ENCODE measurements at regions of chr10 and their contacts with region 1.

Region 1: DNA sequence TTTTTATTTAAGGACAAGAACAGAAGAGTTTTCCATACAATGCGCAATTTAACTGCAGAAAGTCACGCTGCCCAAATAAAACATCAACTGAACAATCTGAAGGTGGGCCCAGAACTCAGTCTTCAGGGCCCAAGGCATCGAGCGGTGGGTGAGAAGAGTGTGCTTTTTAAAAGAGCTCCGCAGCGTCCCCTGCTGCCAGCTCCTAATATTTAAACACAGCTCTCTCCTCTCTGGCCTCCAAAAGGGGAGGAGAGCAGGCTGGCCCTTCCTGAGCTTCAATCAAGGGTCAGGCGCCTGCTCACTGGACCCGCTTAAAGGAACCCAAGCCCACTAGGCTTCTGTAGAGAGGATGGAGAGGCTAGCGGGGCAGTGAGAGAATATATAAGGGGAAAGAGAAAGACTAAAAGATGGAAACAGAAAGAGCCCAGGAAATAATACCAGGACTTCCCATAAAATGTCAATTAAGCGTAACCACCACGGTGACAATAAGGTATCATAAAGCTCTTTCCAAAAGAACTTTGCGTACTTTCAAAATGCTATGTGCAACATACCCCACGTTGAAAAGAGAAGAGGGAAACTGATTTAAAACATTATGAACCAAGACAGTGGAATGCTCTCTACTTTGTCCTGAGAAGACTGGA is 2.8 kb downstream of the FAM53B start:
- DNase-seq: peak; percentile 85 to 92 (median 88)
- H3K4me3 ChIP-seq: no peak overlapping the region
- H3K27ac ChIP-seq: peak overlapping the region in 1 of 2 donors; percentile 78
- H3K4me1 ChIP-seq: peaks cover 37% of the 10 kb centered on the region
- H3K27me3 ChIP-seq: no peaks in the 10 kb centered on the region
- CTCF ChIP-seq: peak; percentile 94 to 95 (median 95)
- EP300 ChIP-seq: no peak
- POLR2A ChIP-seq: no peak

Region 2: GRCh38 chr10:123913688-123914268 is 827.6 kb before region 1 on chr10:
- intact Hi-C with region 1: no loop called
- DNase-seq: peak in 1 of 5 donors; percentile 44
- H3K4me3 ChIP-seq: no peak overlapping the region
- H3K27ac ChIP-seq: no peak overlapping the region
- H3K4me1 ChIP-seq: peaks cover 5% of the 10 kb centered on the region
- H3K27me3 ChIP-seq: no peaks in the 10 kb centered on the region
- CTCF ChIP-seq: no peak
- EP300 ChIP-seq: no peak
- POLR2A ChIP-seq: no peak

Region 3: GRCh38 chr10:124063750-124064603 is 677.4 kb before region 1 on chr10:
- intact Hi-C with region 1: no loop called
- DNase-seq: peak; percentile 63 to 73 (median 66)
- H3K4me3 ChIP-seq: no peak overlapping the region
- H3K27ac ChIP-seq: peak overlapping the region; percentile 52 to 73
- H3K4me1 ChIP-seq: peaks cover 29% of the 10 kb centered on the region
- H3K27me3 ChIP-seq: no peaks in the 10 kb centered on the region
- CTCF ChIP-seq: no peak
- EP300 ChIP-seq: no peak
- POLR2A ChIP-seq: no peak

Region 4: DNA sequence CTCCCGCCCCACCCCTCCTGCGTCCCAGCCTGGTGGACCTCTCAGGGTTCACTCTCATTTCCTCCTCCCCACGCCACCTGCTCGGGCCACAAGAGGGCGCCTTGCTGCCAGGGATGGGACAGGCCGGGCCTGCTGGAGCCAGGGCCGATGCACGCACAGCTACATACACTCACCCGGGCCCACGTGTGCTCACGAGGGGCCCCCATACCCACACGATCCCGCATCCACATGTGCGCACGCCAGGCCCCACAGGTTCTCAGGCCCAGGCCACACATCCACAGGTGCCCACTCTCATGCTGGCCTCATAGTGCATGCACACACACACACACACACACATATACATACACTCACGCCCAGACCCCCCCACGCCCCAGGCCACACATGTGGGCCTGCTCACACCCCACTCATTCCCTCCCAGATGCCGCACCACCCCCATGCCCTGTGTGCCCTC is 211.2 kb before region 1 on chr10:
- intact Hi-C with region 1: loop called in 3 of 4 experiments (anchors 2 to 5 kb)
- DNase-seq: peak; percentile 84 to 92 (median 89)
- H3K4me3 ChIP-seq: no peak overlapping the region
- H3K27ac ChIP-seq: no peak overlapping the region
- H3K4me1 ChIP-seq: peaks cover 10% of the 10 kb centered on the region
- H3K27me3 ChIP-seq: no peaks in the 10 kb centered on the region
- CTCF ChIP-seq: peak; percentile 78 to 86 (median 86)
- EP300 ChIP-seq: no peak
- POLR2A ChIP-seq: no peak

Region 5: GRCh38 chr10:124539935-124540641 is 201.3 kb before region 1 on chr10:
- intact Hi-C with region 1: loop called in 3 of 4 experiments (anchors 2 to 5 kb)
- DNase-seq: peak; percentile 67 to 84 (median 81)
- H3K4me3 ChIP-seq: no peak overlapping the region
- H3K27ac ChIP-seq: no peak overlapping the region
- H3K4me1 ChIP-seq: peaks cover 17% of the 10 kb centered on the region
- H3K27me3 ChIP-seq: no peaks in the 10 kb centered on the region
- CTCF ChIP-seq: peak; percentile 70 to 89 (median 86)
- EP300 ChIP-seq: no peak
- POLR2A ChIP-seq: no peak

Region 6: DNA sequence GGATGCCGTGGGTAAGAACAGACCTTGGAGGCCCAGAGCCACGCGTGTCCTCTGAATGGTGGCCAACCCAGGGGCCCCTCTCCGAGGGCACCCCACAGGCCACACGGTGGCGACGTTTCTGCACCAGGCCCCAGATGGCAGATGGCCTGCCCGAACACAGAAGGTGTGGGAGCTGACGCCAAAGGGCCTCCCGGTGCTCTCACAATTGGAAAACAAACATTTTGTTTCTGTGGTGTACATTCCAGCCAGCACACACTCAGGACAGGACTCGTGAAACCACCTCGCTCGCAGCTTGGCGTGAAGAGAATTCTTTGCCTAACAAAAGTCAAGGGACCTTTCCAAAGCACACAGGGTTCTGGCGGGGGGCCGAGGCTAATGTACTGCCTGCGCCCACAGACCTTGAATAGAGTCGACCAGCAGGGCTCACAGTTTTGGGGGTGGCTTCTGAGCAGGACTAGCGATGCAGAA is 109.3 kb before region 1 on chr10:
- intact Hi-C with region 1: loop called (anchors 2 to 5 kb)
- DNase-seq: peak; percentile 68 to 84 (median 76)
- H3K4me3 ChIP-seq: no peak overlapping the region
- H3K27ac ChIP-seq: peak overlapping the region; percentile 71 to 73
- H3K4me1 ChIP-seq: peaks cover 47% of the 10 kb centered on the region
- H3K27me3 ChIP-seq: no peaks in the 10 kb centered on the region
- CTCF ChIP-seq: peak; percentile 19 to 67 (median 34)
- EP300 ChIP-seq: no peak
- POLR2A ChIP-seq: no peak

Region 7: DNA sequence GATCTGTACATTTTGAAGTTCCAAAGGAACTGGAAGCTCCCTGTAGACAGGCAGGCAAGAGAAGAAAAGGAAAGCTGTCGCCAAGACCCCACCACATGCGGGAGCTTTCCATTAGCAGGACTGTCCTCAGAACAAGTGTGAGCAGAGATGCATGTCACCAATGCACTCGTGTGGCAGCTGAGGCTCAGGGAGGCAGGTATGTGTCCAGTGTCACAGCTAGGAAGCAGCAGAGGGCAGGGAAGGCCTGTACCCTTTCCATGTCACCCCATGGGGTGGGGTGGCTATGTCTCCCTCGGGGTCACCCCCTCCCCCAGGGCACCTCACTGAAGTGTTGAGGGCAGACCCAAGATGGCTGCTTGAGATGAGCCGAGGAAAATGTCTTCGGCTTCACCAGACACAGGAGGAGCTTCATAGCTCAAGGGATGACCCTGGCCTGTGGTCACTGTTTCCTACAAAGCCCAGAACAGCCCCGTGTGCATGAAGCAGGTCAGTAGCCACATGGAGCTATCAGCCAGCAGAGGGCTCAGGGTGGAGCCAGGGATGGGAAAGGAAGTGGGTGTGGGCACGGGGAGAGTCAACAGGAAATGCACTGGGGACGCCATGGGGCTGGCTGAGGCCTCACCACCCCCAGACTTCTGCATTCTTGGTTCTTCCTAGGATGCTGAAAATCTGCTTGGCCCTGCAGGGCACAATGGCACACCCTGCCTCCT is 93.8 kb before region 1 on chr10:
- intact Hi-C with region 1: loop called in 1 of 4 experiments (anchors 5 kb)
- DNase-seq: no peak
- H3K4me3 ChIP-seq: no peak overlapping the region
- H3K27ac ChIP-seq: peak overlapping the region; percentile 54 to 86
- H3K4me1 ChIP-seq: peaks cover 42% of the 10 kb centered on the region
- H3K27me3 ChIP-seq: no peaks in the 10 kb centered on the region
- CTCF ChIP-seq: no peak
- EP300 ChIP-seq: no peak
- POLR2A ChIP-seq: no peak

Region 8: GRCh38 chr10:124701435-124701834 is 40.0 kb before region 1 on chr10:
- intact Hi-C with region 1: loop called (anchors 5 kb)
- DNase-seq: peak; percentile 98 to 100 (median 99)
- H3K4me3 ChIP-seq: no peak overlapping the region
- H3K27ac ChIP-seq: peak overlapping the region; percentile 74 to 96
- H3K4me1 ChIP-seq: peaks cover 72% of the 10 kb centered on the region
- H3K27me3 ChIP-seq: no peaks in the 10 kb centered on the region
- CTCF ChIP-seq: no peak
- EP300 ChIP-seq: no peak
- POLR2A ChIP-seq: no peak

Region 9: DNA sequence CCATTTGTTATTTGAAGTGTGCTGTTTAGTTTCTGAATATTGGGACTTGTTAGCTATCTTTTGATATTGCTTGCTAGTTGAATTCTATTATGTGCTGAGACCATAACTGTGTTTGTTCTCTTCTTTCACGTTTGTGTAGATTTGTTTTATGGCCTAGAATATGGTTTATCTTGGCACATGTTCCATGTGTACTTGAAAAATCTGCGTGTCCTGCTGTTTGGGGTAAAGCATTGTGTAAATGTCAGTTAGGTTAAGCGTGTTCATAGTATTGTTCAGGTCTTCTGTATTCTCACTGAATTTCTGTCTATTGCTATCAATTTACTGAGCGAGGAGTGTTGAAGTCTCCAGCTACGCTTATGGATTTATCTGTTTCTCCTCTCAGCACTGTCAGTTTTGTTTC is 1014.8 kb after region 1 on chr10:
- intact Hi-C with region 1: no loop called
- DNase-seq: no peak
- H3K4me3 ChIP-seq: no peak overlapping the region
- H3K27ac ChIP-seq: no peak overlapping the region
- H3K4me1 ChIP-seq: no peaks in the 10 kb centered on the region
- H3K27me3 ChIP-seq: no peaks in the 10 kb centered on the region
- CTCF ChIP-seq: no peak
- EP300 ChIP-seq: no peak
- POLR2A ChIP-seq: no peak